ENCODE measurements at regions of chr20 and their contacts with region 1.

Region 1: DNA sequence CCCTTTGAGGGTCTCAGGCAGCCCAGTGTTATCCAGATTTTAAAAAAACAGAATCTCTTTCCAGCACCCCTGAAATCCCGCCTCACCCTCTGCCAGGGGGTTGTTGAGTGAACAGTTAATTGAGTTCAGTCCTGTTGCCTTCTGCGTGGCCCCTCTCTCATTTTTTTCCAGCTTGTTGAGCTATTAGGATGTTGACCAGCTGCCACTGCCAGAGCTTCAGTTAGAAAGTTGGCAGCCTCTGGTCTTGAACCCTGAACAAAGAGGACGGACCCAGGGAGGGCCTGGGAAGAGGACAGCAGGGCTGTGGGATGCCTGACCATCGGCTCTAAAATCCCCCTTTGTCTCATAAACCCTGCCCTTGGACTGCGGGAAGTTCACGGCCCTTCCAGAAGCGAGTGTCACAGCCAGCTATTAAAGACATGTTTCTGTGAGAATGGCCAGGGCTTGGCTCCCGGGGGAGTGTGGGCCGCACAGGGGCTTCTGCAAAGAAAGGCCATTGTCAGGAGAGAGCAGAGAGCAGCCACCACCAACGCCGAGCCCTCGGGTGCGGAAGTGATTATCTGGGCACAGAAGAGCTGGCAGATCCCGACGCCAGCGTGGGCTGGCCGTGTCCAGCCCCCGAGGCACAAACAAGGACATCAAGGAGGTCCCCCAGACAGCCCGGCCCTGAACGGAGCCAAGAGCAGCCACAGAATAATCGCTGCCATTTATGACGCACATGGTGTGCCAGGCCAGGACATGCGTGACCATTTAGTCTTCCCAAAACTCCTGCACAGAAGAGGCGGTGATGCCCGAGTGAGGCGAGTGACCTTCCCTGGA is 189.0 kb downstream of the ANKRD60 start:
- DNase-seq: no peak
- H3K4me3 ChIP-seq: no peak overlapping the region
- H3K27ac ChIP-seq: peak overlapping the region in 1 of 4 donors; percentile 17
- H3K4me1 ChIP-seq: no peaks in the 10 kb centered on the region
- H3K27me3 ChIP-seq: no peaks in the 10 kb centered on the region
- CTCF ChIP-seq: no peak
- EP300 ChIP-seq: no peak
- POLR2A ChIP-seq: no peak

Region 2: GRCh38 chr20:58094160-58094559 is 54.7 kb after region 1 on chr20:
- in situ Hi-C with region 1: loop called in 1 of 4 experiments (anchors 10 kb)
- intact Hi-C with region 1: no loop called
- DNase-seq: no peak
- H3K4me3 ChIP-seq: no peak overlapping the region
- H3K27ac ChIP-seq: no peak overlapping the region
- H3K4me1 ChIP-seq: no peaks in the 10 kb centered on the region
- H3K27me3 ChIP-seq: no peaks in the 10 kb centered on the region
- CTCF ChIP-seq: no peak
- EP300 ChIP-seq: no peak
- POLR2A ChIP-seq: no peak

Region 3: GRCh38 chr20:58309575-58310290 is 270.2 kb after region 1 on chr20 and contains the start of gene RAB22A:
- in situ Hi-C with region 1: no loop called
- intact Hi-C with region 1: no loop called
- DNase-seq: peak; percentile 89
- H3K4me3 ChIP-seq: peak within 1 kb of the TSS; percentile 78 to 98 (median 88)
- H3K27ac ChIP-seq: peak within 1 kb of the TSS; percentile 90 to 91 (median 90)
- H3K4me1 ChIP-seq: peaks cover 9 to 50% (median 29%) of the 10 kb centered on the region in 4 donors
- H3K27me3 ChIP-seq: no peaks in the 10 kb centered on the region
- CTCF ChIP-seq: no peak
- EP300 ChIP-seq: no peak
- POLR2A ChIP-seq: peak; percentile 1
- total RNA-seq, gene RAB22A: 4.2 to 25.9 (median 20.7) TPM

Region 4: DNA sequence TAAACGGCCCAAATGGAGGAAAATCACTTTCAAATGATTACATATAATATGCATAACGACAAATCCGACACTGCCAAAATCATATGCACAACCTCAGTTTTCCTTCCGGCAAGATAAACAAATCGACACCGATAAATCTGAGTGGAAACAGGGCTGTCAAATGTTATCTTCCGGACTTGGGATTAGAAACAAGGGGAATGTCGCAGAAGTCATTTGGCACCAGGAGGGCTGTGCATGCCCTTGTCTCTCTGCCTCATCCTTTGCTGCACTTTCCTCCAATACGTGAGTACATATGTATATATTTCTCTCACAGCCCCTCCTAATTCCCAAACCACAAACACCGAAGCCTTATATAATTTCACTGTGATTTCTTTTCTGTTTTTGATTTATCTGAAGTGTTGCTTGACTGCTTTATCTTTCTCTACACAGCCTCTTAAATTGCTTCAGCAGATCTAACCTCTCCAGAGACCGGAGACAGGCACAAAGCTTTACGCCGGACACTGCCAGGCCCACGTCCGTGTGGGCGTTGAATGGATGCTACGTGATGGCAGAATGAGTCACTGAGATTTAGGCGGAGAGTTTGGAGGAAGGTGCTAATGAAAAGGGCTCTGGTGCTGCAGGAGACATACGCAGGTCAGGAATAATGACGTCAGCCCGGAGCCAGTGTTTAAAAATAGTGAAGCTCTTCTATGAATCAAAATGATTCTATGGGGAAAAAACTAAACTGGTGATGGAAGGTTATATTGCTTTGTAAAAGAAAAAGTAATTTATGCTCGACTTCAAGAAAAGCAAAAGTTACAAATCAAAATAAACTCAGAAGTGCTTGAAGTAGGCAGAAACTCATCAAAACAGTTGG is 1024.1 kb after region 1 on chr20:
- in situ Hi-C with region 1: no loop called
- intact Hi-C with region 1: no loop called
- DNase-seq: no peak
- H3K4me3 ChIP-seq: no peak overlapping the region
- H3K27ac ChIP-seq: peak overlapping the region in 3 of 4 donors; percentile 6 to 66 (median 16)
- H3K4me1 ChIP-seq: peaks cover 0 to 4% (median 1%) of the 10 kb centered on the region in 4 donors
- H3K27me3 ChIP-seq: peaks cover 4% of the 10 kb centered on the region
- CTCF ChIP-seq: no peak
- EP300 ChIP-seq: no peak
- POLR2A ChIP-seq: no peak

Region 5: DNA sequence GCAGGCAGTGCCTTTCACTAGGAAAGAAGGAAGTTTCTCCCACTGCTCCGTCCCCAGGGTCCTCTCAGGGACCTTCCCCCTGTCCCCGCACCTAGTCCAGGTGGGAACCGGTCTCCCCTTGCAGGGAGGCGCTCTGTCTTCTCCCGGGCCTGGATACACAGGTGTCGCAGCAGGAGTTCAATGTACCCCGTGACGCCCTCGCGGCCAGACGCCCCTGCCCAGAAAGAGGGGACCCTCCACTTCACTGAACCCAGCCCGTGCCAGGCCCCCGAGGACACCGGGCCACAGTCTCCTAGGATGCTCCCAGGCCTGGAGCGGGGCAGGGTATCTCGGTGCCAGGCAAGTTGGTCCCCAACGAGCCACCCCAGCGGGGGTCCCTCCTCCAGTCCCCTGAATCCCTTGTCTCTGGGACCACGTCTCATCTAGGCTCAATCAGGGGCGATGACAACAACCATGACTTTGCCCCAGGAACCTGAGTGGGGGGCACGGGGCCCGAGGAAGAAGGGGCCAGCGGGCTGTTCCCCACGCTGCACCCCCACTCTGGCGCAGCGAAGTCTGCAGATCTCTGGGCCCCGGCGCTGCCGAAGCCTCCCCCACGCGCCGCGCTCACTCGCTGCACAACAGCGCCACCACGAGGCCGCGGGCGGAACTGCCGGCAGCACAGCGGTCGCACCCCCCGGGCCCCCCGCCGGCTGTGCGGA is 1363.9 kb after region 1 on chr20:
- in situ Hi-C with region 1: no loop called
- intact Hi-C with region 1: no loop called
- DNase-seq: peak; percentile 62
- H3K4me3 ChIP-seq: peak overlapping the region in 2 of 4 donors; percentile 1 to 23
- H3K27ac ChIP-seq: no peak overlapping the region
- H3K4me1 ChIP-seq: peaks cover 7 to 18% (median 11%) of the 10 kb centered on the region in 4 donors
- H3K27me3 ChIP-seq: peaks cover 72% of the 10 kb centered on the region
- CTCF ChIP-seq: peak; percentile 91 to 100 (median 99)
- EP300 ChIP-seq: no peak
- POLR2A ChIP-seq: no peak

Region 6: DNA sequence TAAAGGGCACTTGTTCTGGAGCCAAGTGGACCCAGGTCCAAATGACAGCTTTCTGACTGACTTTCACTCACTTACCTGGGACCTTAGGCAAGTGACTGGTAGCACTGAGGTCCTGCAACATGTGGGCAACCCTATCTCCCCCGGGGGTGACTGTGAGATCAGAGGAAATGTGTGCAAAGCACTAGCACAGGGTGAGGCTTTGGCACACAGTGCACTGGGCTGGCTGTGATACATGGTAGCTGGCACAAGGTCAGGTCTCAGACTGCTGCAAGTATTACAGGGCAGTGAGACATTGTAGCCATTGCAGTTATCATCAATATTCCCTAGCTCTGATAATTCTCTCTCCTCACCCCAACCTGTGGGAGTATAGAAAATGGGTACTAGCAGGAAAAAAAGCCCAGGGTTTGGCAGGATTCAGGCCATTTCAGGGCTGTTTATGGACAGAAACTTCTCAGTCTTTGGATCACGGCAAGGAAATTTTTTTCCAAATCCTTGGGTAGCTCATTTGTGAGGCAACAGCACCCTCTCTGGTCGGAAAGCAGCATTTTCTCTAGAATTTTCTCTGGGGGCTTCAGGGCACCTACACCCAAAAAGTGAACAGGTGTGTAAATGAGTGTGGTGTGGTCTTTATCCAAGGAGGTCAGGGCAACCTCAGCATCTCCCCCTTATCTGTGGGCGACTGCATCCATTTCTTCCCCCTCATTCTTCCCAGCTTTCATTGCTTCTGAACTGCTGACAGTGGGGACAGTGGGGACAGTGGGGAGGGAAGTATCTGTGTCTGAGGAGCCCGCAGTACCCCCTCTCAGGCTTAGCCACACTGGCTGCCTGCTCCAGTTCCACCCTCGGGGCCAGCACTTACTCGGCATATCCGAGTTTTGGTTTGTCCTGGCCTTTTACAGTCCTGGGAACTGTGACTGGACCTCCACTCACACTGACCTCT is 1416.2 kb after region 1 on chr20:
- in situ Hi-C with region 1: no loop called
- intact Hi-C with region 1: no loop called
- DNase-seq: no peak
- H3K4me3 ChIP-seq: no peak overlapping the region
- H3K27ac ChIP-seq: no peak overlapping the region
- H3K4me1 ChIP-seq: no peaks in the 10 kb centered on the region
- H3K27me3 ChIP-seq: no peaks in the 10 kb centered on the region
- CTCF ChIP-seq: peak; percentile 53 to 66 (median 53)
- EP300 ChIP-seq: no peak
- POLR2A ChIP-seq: no peak

Measured in transverse colon (tissue), 4 donors.